Natural killer cell (primary cell): ENCODE measurements at regions of chr21 and their contacts with region 1.

Region 1: GRCh38 chr21:32278518-32279376 is at the start of gene MIS18A:
- DNase-seq: peak; percentile 97
- ATAC-seq: peak; percentile 92 to 94 (median 94)
- H3K4me3 ChIP-seq: peak within 1 kb of the TSS; percentile 66
- H3K4me3 Mint-ChIP-seq: peak within 1 kb of the TSS; percentile 98
- H3K27ac ChIP-seq: peak within 1 kb of the TSS; percentile 38
- H3K27ac Mint-ChIP-seq: peak within 1 kb of the TSS; percentile 93 to 96
- H3K4me1 ChIP-seq: peaks cover 15% of the 10 kb centered on the region
- H3K4me1 Mint-ChIP-seq: peaks cover 21 to 28% of the 10 kb centered on the region in 2 donors
- H3K27me3 ChIP-seq: no peaks in the 10 kb centered on the region
- H3K27me3 Mint-ChIP-seq: no peaks in the 10 kb centered on the region
- CTCF ChIP-seq: no peak
- total RNA-seq, gene MIS18A: 4.2 to 7.9 (median 5.2) TPM

Region 2: DNA sequence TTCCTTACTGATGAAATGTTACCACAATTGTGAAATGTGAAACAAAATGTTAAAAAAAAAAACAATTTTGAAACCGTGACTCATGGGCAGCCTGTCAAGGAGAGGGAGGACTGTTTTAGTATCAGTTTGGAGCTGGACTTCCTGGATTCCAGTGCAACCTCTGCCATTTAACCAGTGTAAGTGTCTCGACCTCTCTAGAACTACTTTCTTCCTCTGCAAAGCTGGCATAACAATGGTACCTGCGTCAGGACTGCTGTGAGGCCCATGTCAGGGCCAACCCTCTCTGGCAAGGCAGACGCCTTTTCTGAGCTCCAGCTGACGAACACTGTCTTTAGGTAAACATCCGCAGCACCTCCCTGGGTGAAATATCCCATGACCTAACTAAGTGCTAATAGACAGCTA is 93.2 kb after region 1 on chr21:
- intact Hi-C with region 1: no loop called
- DNase-seq: no peak
- ATAC-seq: no peak
- H3K4me3 ChIP-seq: no peak overlapping the region
- H3K4me3 Mint-ChIP-seq: no peak overlapping the region
- H3K27ac ChIP-seq: no peak overlapping the region
- H3K27ac Mint-ChIP-seq: no peak overlapping the region
- H3K4me1 ChIP-seq: no peaks in the 10 kb centered on the region
- H3K4me1 Mint-ChIP-seq: no peaks in the 10 kb centered on the region
- H3K27me3 ChIP-seq: no peaks in the 10 kb centered on the region
- H3K27me3 Mint-ChIP-seq: no peaks in the 10 kb centered on the region
- CTCF ChIP-seq: no peak

Region 3: DNA sequence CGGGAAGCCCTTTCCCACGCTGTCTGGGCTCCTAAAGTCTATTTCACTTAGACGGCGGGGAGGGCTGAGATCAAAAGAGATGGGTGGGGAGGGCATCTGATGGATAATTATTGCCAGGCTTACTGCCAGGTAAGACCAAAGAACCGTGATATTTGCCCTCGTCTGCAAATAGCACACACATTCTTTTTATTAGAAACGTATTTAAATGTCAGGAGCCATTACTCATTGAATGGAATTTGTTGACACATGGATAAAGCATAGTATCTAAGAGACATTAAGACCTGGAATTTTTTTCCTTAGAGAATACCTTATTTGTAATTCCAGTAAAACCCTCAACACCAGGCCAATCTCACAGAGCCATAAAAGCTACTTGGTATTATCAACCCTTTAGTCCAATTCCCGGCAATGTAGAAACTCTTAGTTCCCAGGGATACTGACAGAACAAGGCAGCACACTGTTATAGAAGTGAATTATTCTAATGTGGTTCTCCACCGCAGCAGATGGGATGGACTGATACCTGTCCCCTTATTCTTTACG is 103.4 kb after region 1 on chr21:
- intact Hi-C with region 1: no loop called
- DNase-seq: no peak
- ATAC-seq: no peak
- H3K4me3 ChIP-seq: no peak overlapping the region
- H3K4me3 Mint-ChIP-seq: no peak overlapping the region
- H3K27ac ChIP-seq: no peak overlapping the region
- H3K27ac Mint-ChIP-seq: no peak overlapping the region
- H3K4me1 ChIP-seq: no peaks in the 10 kb centered on the region
- H3K4me1 Mint-ChIP-seq: peaks cover 0 to 8% of the 10 kb centered on the region in 2 donors
- H3K27me3 ChIP-seq: no peaks in the 10 kb centered on the region
- H3K27me3 Mint-ChIP-seq: no peaks in the 10 kb centered on the region
- CTCF ChIP-seq: no peak

Region 4: DNA sequence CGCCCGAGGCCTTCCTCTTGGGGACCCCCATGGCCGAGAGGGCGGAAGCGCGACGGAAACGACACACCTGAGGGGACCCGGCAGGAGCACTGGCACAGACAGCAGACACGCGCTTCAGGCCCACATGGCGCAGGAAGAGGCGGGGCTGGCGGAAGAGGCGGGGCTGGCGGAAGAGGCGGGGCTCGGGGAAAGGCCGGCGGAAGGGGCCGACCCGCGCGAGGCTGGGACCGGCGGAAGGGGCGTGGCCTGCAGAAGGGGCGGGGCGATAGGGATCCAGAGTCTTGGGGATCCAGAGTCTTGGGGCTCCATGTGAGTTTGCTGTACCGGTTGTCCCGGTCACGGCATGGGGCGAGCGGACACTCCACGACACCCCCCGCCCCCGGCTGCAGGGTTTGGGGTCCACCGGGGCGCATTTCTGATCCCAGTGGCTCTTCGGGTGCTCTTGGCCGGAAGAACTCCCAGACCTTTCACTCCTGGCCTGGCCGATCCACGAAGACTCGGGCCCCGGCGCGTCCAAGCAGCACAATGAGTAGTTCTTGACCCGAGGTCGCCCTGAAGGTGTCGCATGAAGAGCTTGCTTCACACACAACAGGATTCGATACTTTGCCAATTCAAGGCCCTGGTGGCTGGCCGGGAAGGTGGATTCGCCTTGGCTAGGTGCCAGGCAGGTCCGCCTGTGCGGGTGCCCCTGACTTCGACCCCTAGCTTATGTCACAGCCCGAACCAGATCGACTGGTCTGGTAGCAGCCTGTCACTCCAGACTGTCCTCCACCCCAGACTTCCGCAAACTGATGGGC is 114.3 kb after region 1 on chr21 and contains the start of gene URB1:
- intact Hi-C with region 1: loop called (anchors 2 kb)
- DNase-seq: peak; percentile 94 to 97
- ATAC-seq: peak; percentile 98 to 99 (median 98)
- H3K4me3 ChIP-seq: peak within 1 kb of the TSS; percentile 88
- H3K4me3 Mint-ChIP-seq: peak within 1 kb of the TSS; percentile 84
- H3K27ac ChIP-seq: peak within 1 kb of the TSS; percentile 91
- H3K27ac Mint-ChIP-seq: peak within 1 kb of the TSS; percentile 83 to 86
- H3K4me1 ChIP-seq: peaks cover 17% of the 10 kb centered on the region
- H3K4me1 Mint-ChIP-seq: peaks cover 37 to 38% of the 10 kb centered on the region in 2 donors
- H3K27me3 ChIP-seq: no peaks in the 10 kb centered on the region
- H3K27me3 Mint-ChIP-seq: peaks cover 0 to 7% of the 10 kb centered on the region in 2 donors
- CTCF ChIP-seq: no peak
- total RNA-seq, gene URB1: 6.1 to 7.8 (median 7.5) TPM